ENCODE measurements at regions of chrX and their contacts with region 1.

Region 1: GRCh38 chrX:38803586-38804431 is 2.5 kb downstream of the MID1IP1 start:
- DNase-seq: peak; percentile 92
- H3K4me3 ChIP-seq: peak overlapping the region; percentile 54 to 78 (median 68)
- H3K27ac ChIP-seq: peak overlapping the region; percentile 90 to 95 (median 93)
- H3K4me1 ChIP-seq: peaks cover 0 to 24% (median 17%) of the 10 kb centered on the region in 4 donors
- H3K27me3 ChIP-seq: no peaks in the 10 kb centered on the region
- CTCF ChIP-seq: no peak
- EP300 ChIP-seq: peak in 1 of 4 donors; percentile 42
- POLR2A ChIP-seq: peak; percentile 75 to 85

Region 2: DNA sequence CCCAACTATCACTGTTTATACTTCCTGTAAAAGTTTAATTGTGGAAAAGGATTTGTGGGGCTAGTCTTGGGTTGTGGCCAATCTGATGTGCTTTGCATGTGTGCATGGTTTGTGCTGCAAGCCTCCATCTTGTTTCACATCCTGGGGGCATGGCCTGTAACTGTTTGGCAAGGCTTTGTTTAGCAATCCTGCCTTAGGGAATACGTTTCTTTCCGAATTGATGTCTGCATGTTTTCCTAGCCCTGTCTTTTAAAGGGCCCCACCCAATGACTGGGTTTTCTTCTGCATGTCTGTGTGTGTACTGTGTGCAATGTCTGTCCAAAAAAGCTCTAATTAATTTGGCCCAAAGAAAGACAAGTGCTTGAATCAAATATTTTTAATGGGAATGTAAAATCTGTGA is 77.2 kb before region 1 on chrX:
- intact Hi-C with region 1: no loop called
- DNase-seq: no peak
- H3K4me3 ChIP-seq: no peak overlapping the region
- H3K27ac ChIP-seq: no peak overlapping the region
- H3K4me1 ChIP-seq: no peaks in the 10 kb centered on the region
- H3K27me3 ChIP-seq: no peaks in the 10 kb centered on the region
- CTCF ChIP-seq: no peak
- EP300 ChIP-seq: no peak
- POLR2A ChIP-seq: no peak

Region 3: GRCh38 chrX:38927592-38927991 is 123.8 kb after region 1 on chrX:
- intact Hi-C with region 1: loop called (anchors 2 kb)
- DNase-seq: no peak
- H3K4me3 ChIP-seq: no peak overlapping the region
- H3K27ac ChIP-seq: peak overlapping the region in 3 of 4 donors; percentile 55 to 79 (median 72)
- H3K4me1 ChIP-seq: peaks cover 0 to 29% (median 9%) of the 10 kb centered on the region in 4 donors
- H3K27me3 ChIP-seq: no peaks in the 10 kb centered on the region
- CTCF ChIP-seq: no peak
- EP300 ChIP-seq: peak in 1 of 4 donors; percentile 54
- POLR2A ChIP-seq: no peak

Region 4: DNA sequence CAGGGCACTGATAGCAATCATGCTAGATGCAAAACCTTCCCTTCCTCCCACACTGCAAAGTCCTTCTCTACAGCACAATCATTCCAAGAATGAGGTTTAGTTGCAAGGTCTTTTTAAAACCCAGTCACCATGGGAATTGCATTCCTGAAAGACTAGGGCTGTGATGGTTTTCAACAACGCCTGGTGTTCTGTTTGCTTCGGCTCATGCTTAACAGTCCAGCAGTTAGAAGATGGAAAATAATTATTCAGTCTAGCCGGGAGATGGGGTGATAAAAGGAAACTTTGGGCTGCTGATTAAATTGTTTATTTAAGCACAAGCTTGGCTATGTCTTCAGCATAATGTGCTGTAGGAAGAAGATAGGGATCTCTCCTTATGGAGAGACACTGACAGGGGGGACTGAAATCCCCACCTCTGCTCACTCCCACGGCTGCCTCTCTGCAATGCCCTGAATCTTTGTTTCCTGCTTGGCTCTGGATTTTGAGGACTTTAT is 208.9 kb after region 1 on chrX:
- intact Hi-C with region 1: no loop called
- DNase-seq: no peak
- H3K4me3 ChIP-seq: no peak overlapping the region
- H3K27ac ChIP-seq: peak overlapping the region in 2 of 4 donors; percentile 14 to 29
- H3K4me1 ChIP-seq: peaks cover 0 to 9% (median 0%) of the 10 kb centered on the region in 4 donors
- H3K27me3 ChIP-seq: no peaks in the 10 kb centered on the region
- CTCF ChIP-seq: no peak
- EP300 ChIP-seq: no peak
- POLR2A ChIP-seq: no peak

Region 5: GRCh38 chrX:39336671-39337311 is 533.0 kb after region 1 on chrX:
- intact Hi-C with region 1: loop called (anchors 5 kb)
- DNase-seq: peak; percentile 86
- H3K4me3 ChIP-seq: no peak overlapping the region
- H3K27ac ChIP-seq: peak overlapping the region; percentile 58 to 76 (median 71)
- H3K4me1 ChIP-seq: peaks cover 0 to 16% (median 6%) of the 10 kb centered on the region in 4 donors
- H3K27me3 ChIP-seq: no peaks in the 10 kb centered on the region
- CTCF ChIP-seq: no peak
- EP300 ChIP-seq: peak in 1 of 4 donors; percentile 44
- POLR2A ChIP-seq: no peak

Region 6: DNA sequence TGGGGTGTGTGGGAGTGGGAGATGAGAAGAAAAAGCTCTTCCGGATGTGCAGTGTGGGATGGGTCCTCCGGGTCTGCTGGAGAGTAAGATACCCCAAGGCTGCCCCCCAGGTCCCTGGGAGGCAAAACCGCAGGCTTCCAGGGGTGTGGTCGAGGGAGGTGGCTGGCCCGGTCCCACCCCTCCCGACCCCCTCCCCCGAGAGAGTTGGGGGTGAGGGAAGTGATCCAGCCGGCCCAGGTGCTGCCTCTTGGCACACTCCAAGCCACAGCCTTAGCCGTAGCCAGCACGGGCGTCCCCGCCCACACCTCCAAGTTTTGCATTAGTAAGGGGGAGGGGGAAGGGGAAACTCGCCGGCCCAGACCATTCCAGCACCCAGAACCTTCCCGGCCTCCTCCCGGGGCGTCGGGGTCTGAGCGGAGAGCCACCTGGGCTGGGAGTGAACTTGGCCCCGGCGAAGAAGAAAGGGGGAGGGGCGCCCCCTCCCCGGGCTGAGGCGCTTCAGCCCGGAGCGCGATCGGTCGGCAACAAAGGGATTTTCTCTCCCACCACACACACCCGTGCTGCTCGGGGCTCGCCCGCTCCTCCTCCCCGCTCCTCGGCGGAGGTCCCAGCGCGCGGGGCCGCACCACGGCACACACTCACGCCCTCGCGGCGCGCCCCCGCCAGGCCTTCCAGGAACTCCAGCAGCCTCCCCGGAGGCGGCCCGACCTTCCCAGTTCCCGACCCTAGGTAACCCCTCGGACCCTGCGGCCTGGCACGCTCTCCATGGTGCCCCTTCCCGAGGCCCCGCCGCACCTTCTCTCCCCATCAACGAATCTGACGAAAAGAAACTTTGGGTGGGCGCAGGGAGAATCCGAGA is 1279.5 kb after region 1 on chrX:
- intact Hi-C with region 1: loop called (anchors 5 kb)
- DNase-seq: no peak
- H3K4me3 ChIP-seq: peak overlapping the region; percentile 18 to 47 (median 44)
- H3K27ac ChIP-seq: peak overlapping the region in 3 of 4 donors; percentile 35 to 56 (median 37)
- H3K4me1 ChIP-seq: peaks cover 0 to 74% (median 68%) of the 10 kb centered on the region in 4 donors
- H3K27me3 ChIP-seq: no peaks in the 10 kb centered on the region
- CTCF ChIP-seq: no peak
- EP300 ChIP-seq: no peak
- POLR2A ChIP-seq: no peak

Region 7: DNA sequence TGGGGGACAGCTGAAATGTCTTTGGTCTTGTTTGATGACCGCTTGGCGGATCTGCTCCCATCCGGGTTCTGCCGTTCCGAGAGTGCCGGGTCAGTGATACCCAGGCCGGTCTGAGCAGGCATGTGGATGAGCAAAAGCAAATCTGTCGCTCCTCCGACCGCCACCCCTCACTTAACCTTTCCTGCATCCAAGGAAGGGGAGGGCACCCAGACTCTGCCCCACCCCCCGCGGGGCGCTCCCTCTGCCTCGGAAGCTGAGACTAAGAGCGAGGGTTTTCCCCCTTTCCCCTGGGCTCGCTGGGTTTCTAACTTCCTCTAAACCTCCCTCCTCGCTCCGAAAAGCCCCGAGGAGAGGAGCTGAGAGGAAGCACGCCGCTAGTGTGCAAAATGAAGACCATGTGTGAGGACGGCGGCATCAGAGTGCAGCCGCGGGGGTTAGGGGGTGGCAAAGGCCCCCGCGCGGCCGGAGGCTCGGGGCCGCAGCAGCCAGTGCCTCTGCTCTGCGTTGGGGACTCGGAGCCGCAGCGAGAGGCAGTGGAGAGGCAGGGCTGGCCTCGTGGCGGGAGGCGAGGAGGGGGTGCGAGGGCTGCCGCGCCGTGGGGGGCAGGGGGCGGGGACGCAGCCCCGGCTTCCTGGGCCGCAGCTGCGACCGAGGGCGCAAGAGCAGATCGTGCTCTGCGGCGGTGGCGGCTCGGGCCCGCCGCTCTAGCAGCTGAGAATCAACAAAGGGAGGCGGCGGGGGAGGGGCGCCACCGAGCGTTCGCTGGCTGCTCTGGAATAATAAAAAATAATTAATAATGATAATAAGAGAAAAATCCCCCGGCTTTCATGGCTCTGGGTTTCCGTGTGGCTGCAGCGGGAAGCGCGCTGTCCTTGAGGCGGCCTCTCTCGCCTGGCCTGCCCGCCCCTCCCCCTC is 1349.8 kb after region 1 on chrX:
- intact Hi-C with region 1: loop called (anchors 5 kb)
- DNase-seq: peak; percentile 73
- H3K4me3 ChIP-seq: peak overlapping the region; percentile 19 to 53 (median 48)
- H3K27ac ChIP-seq: peak overlapping the region; percentile 71 to 82 (median 76)
- H3K4me1 ChIP-seq: peaks cover 0 to 51% (median 16%) of the 10 kb centered on the region in 4 donors
- H3K27me3 ChIP-seq: peaks cover 0 to 14% (median 0%) of the 10 kb centered on the region in 3 donors
- CTCF ChIP-seq: no peak
- EP300 ChIP-seq: no peak
- POLR2A ChIP-seq: no peak

Measured in sigmoid colon (tissue), 7 donors.